CD8-positive, alpha-beta memory T cell (primary cell): ENCODE measurements at regions of chr10 and their contacts with region 1.

Region 1: GRCh38 chr10:73940634-73941221 is 29.8 kb downstream of the PLAU start:
- DNase-seq: peak; percentile 73 to 86 (median 79)
- H3K4me3 ChIP-seq: peak overlapping the region; percentile 44
- H3K4me3 Mint-ChIP-seq: peak overlapping the region; percentile 6 to 77 (median 63)
- H3K27ac ChIP-seq: peak overlapping the region; percentile 19
- H3K27ac Mint-ChIP-seq: peak overlapping the region in 4 of 8 donors; percentile 15 to 86 (median 72)
- H3K4me1 ChIP-seq: peaks cover 8% of the 10 kb centered on the region
- H3K4me1 Mint-ChIP-seq: peaks cover 6 to 8% (median 7%) of the 10 kb centered on the region in 3 donors
- H3K27me3 ChIP-seq: no peaks in the 10 kb centered on the region
- H3K27me3 Mint-ChIP-seq: peaks cover 0 to 5% of the 10 kb centered on the region in 2 donors

Region 2: DNA sequence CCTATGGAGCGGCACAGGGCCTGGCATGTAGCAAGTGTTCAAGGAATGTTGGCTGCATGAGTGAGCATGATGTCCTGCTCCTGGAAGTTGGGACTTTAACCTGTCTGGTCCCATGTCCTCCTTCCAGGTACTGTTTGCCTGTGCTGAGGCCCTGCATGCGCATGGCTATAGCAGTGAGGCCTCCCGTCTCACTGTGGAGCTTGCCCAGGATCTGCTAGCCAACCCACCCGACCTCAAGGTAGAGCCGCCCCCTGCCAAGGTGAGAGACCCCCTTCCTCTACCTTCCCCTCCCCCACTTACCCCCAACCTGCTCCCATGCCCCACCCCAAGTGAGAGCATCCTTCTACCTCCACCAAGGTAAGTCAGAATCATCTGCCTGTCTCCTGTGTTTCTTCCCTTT is 147.3 kb before region 1 on chr10:
- CTCF ChIA-PET with region 1: no interaction called
- POLR2A ChIA-PET with region 1: no interaction called
- DNase-seq: no peak
- H3K4me3 ChIP-seq: no peak overlapping the region
- H3K4me3 Mint-ChIP-seq: peak overlapping the region in 1 of 7 donors; percentile 41
- H3K27ac ChIP-seq: no peak overlapping the region
- H3K27ac Mint-ChIP-seq: peak overlapping the region in 2 of 8 donors; percentile 34 to 51
- H3K4me1 ChIP-seq: peaks cover 1% of the 10 kb centered on the region
- H3K4me1 Mint-ChIP-seq: peaks cover 0 to 4% (median 2%) of the 10 kb centered on the region in 3 donors
- H3K27me3 ChIP-seq: no peaks in the 10 kb centered on the region
- H3K27me3 Mint-ChIP-seq: peaks cover 0 to 2% of the 10 kb centered on the region in 2 donors

Region 3: GRCh38 chr10:73859428-73859783 is 81.3 kb before region 1 on chr10:
- CTCF ChIA-PET with region 1: interaction called, 11 read pairs
- POLR2A ChIA-PET with region 1: no interaction called
- DNase-seq: peak in 4 of 5 donors; percentile 31 to 67 (median 50)
- H3K4me3 ChIP-seq: peak overlapping the region; percentile 5
- H3K4me3 Mint-ChIP-seq: peak overlapping the region in 6 of 7 donors; percentile 47 to 82 (median 68)
- H3K27ac ChIP-seq: peak overlapping the region; percentile 21
- H3K27ac Mint-ChIP-seq: peak overlapping the region; percentile 70 to 98 (median 92)
- H3K4me1 ChIP-seq: peaks cover 63% of the 10 kb centered on the region
- H3K4me1 Mint-ChIP-seq: peaks cover 67 to 90% (median 80%) of the 10 kb centered on the region in 3 donors
- H3K27me3 ChIP-seq: no peaks in the 10 kb centered on the region
- H3K27me3 Mint-ChIP-seq: no peaks in the 10 kb centered on the region

Region 4: GRCh38 chr10:73879296-73880173 is 61.2 kb before region 1 on chr10:
- CTCF ChIA-PET with region 1: interaction called, 260 read pairs
- POLR2A ChIA-PET with region 1: interaction called, 3 read pairs
- DNase-seq: peak; percentile 87 to 96 (median 93)
- H3K4me3 ChIP-seq: no peak overlapping the region
- H3K4me3 Mint-ChIP-seq: peak overlapping the region in 1 of 7 donors; percentile 7
- H3K27ac ChIP-seq: no peak overlapping the region
- H3K27ac Mint-ChIP-seq: peak overlapping the region; percentile 51 to 97 (median 86)
- H3K4me1 ChIP-seq: peaks cover 28% of the 10 kb centered on the region
- H3K4me1 Mint-ChIP-seq: peaks cover 21 to 44% (median 23%) of the 10 kb centered on the region in 3 donors
- H3K27me3 ChIP-seq: no peaks in the 10 kb centered on the region
- H3K27me3 Mint-ChIP-seq: peaks cover 0 to 3% of the 10 kb centered on the region in 2 donors

Region 5: GRCh38 chr10:73899423-73899822 is 41.3 kb before region 1 on chr10:
- CTCF ChIA-PET with region 1: interaction called, 260 read pairs
- POLR2A ChIA-PET with region 1: no interaction called
- DNase-seq: no peak
- H3K4me3 ChIP-seq: no peak overlapping the region
- H3K4me3 Mint-ChIP-seq: no peak overlapping the region
- H3K27ac ChIP-seq: no peak overlapping the region
- H3K27ac Mint-ChIP-seq: no peak overlapping the region
- H3K4me1 ChIP-seq: no peaks in the 10 kb centered on the region
- H3K4me1 Mint-ChIP-seq: no peaks in the 10 kb centered on the region
- H3K27me3 ChIP-seq: peaks cover 2% of the 10 kb centered on the region
- H3K27me3 Mint-ChIP-seq: peaks cover 9 to 26% of the 10 kb centered on the region in 2 donors

Region 6: DNA sequence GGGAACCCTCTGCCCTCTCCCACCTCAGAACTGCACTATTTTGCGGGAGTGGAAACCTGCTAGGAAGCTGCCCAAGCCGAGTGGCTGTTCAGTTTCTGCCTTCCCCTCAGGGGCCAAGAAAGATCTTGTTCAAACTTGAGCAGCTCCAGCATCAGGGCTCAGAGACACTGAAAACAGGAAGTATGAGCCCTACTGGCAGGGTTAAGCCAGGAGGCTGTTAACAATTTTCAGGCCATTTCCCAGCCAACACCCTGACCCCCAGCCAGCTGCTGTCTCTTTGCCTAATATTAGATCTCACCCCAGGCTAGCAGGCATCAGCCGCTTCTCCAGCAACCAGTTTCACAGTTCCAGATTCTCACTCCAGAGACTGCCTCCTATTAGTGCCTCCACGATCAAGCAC is 20.6 kb before region 1 on chr10:
- CTCF ChIA-PET with region 1: interaction called, 22 read pairs
- POLR2A ChIA-PET with region 1: interaction called, 3 read pairs
- DNase-seq: peak in 1 of 5 donors; percentile 16
- H3K4me3 ChIP-seq: no peak overlapping the region
- H3K4me3 Mint-ChIP-seq: no peak overlapping the region
- H3K27ac ChIP-seq: no peak overlapping the region
- H3K27ac Mint-ChIP-seq: peak overlapping the region in 1 of 8 donors; percentile 45
- H3K4me1 ChIP-seq: peaks cover 29% of the 10 kb centered on the region
- H3K4me1 Mint-ChIP-seq: peaks cover 22 to 38% (median 32%) of the 10 kb centered on the region in 3 donors
- H3K27me3 ChIP-seq: no peaks in the 10 kb centered on the region
- H3K27me3 Mint-ChIP-seq: peaks cover 12 to 13% of the 10 kb centered on the region in 2 donors

Region 7: DNA sequence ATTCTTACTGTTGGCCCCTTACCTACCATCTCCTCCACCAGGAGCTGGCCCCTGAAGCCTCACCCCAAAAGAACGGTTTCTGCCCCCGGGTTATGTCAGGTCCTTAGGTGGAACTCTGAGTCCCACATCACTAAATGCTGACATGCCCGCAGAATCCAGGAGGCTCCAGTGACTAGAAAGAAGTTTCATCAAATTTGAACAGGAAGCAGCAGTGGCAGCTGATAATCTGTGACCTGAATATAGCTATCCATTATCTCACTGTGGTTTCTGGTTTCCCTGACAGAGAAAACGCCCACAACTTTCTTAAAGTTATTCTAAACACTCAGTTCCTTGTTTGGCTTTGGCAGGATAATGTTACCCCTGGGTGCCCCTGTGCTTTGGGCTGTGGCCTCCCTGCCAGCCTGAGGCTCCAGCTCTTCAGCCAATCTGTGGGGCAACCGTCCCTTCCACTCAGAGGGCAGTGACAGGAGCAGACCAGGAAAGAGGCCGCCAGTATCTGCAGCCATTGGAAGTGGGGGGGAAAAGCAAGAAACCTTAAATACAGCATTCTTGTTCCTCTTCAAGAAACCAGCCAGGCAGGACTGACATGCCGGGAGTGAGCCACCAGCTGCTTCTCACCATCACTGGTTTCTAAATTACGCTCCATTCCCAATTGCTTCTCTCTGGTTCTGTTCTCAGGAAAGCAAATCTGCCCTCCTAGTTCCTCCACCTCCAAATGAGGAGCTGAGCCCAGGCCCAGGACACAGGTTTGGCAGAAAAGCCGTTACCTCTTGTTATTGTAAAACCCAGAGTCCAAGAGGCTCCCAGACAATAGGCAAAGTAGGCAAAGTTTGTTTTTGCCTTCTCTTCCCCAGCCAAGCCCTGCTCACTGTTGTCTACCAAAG is 16.0 kb after region 1 on chr10:
- CTCF ChIA-PET with region 1: interaction called, 40 read pairs
- POLR2A ChIA-PET with region 1: no interaction called
- DNase-seq: peak; percentile 10 to 68 (median 38)
- H3K4me3 ChIP-seq: peak overlapping the region; percentile 46
- H3K4me3 Mint-ChIP-seq: peak overlapping the region; percentile 69 to 95 (median 84)
- H3K27ac ChIP-seq: peak overlapping the region; percentile 67
- H3K27ac Mint-ChIP-seq: peak overlapping the region; percentile 67 to 98 (median 94)
- H3K4me1 ChIP-seq: peaks cover 51% of the 10 kb centered on the region
- H3K4me1 Mint-ChIP-seq: peaks cover 44 to 66% (median 65%) of the 10 kb centered on the region in 3 donors
- H3K27me3 ChIP-seq: no peaks in the 10 kb centered on the region
- H3K27me3 Mint-ChIP-seq: no peaks in the 10 kb centered on the region

Region 8: DNA sequence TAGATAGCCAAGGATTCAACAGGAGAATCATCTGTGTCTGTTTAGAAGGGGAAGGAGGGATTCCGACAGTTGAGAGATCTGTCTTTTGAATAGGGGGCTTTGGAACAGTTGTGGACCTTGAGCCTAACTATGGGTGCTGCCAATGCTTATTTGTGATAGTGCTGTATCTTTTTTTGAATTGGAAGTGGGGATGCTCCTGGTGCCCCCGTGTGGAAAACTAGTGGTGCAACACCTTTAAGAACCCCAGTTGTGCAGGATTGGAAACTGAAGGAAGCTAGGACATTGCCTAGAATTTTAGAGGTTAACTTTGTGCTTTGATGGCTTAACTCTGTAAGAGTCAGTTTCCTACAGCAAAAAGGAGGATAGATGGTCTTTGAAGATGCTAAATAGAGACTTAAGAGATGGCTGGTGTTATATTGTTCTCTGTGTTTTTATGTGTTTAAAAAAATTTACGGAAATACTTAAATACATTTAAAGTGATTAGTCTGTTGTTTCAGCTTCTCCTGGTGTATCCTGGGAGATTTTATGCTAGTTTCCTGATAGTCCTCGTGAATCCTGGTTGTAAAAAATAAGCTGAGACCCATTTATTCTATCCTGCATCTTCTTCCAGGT is 140.6 kb after region 1 on chr10:
- CTCF ChIA-PET with region 1: interaction called, 21 read pairs
- POLR2A ChIA-PET with region 1: no interaction called
- DNase-seq: peak in 4 of 5 donors; percentile 10 to 53 (median 26)
- H3K4me3 ChIP-seq: no peak overlapping the region
- H3K4me3 Mint-ChIP-seq: no peak overlapping the region
- H3K27ac ChIP-seq: no peak overlapping the region
- H3K27ac Mint-ChIP-seq: peak overlapping the region in 4 of 8 donors; percentile 8 to 74 (median 21)
- H3K4me1 ChIP-seq: peaks cover 12% of the 10 kb centered on the region
- H3K4me1 Mint-ChIP-seq: peaks cover 34 to 47% (median 39%) of the 10 kb centered on the region in 3 donors
- H3K27me3 ChIP-seq: no peaks in the 10 kb centered on the region
- H3K27me3 Mint-ChIP-seq: no peaks in the 10 kb centered on the region

Region 9: GRCh38 chr10:74384615-74385183 is 444.0 kb after region 1 on chr10:
- CTCF ChIA-PET with region 1: no interaction called
- POLR2A ChIA-PET with region 1: no interaction called
- DNase-seq: no peak
- H3K4me3 ChIP-seq: no peak overlapping the region
- H3K4me3 Mint-ChIP-seq: no peak overlapping the region
- H3K27ac ChIP-seq: no peak overlapping the region
- H3K27ac Mint-ChIP-seq: peak overlapping the region in 2 of 8 donors; percentile 4 to 30
- H3K4me1 ChIP-seq: peaks cover 5% of the 10 kb centered on the region
- H3K4me1 Mint-ChIP-seq: peaks cover 18 to 44% (median 35%) of the 10 kb centered on the region in 3 donors
- H3K27me3 ChIP-seq: no peaks in the 10 kb centered on the region
- H3K27me3 Mint-ChIP-seq: no peaks in the 10 kb centered on the region